Prostate gland (tissue), 2 donors: ENCODE measurements at regions of chr4 and their contacts with region 1.

Region 1: GRCh38 chr4:1763550-1764080 is 29.5 kb upstream of the FGFR3 start:
- DNase-seq: no peak
- H3K4me3 ChIP-seq: peak overlapping the region; percentile 9 to 13
- H3K27ac ChIP-seq: no peak overlapping the region
- H3K4me1 ChIP-seq: peaks cover 2% of the 10 kb centered on the region
- H3K27me3 ChIP-seq: no peaks in the 10 kb centered on the region
- CTCF ChIP-seq: no peak
- POLR2A ChIP-seq: no peak

Region 2: GRCh38 chr4:1809754-1810511 is 46.3 kb after region 1 on chr4:
- intact Hi-C with region 1: loop called (anchors 5 kb)
- DNase-seq: peak; percentile 62
- H3K4me3 ChIP-seq: no peak overlapping the region
- H3K27ac ChIP-seq: no peak overlapping the region
- H3K4me1 ChIP-seq: peaks cover 8% of the 10 kb centered on the region
- H3K27me3 ChIP-seq: no peaks in the 10 kb centered on the region
- CTCF ChIP-seq: peak; percentile 79 to 92 (median 81)
- POLR2A ChIP-seq: no peak